ENCODE measurements at regions of chr1 and their contacts with region 1.

Region 1: GRCh38 chr1:15526490-15527339 is at the start of gene DNAJC16:
- DNase-seq: peak; percentile 97 to 100 (median 99)

Region 2: GRCh38 chr1:15124362-15125100 is 402.2 kb before region 1 on chr1:
- intact Hi-C with region 1: no loop called
- DNase-seq: peak in 1 of 10 donors; percentile 73

Region 3: DNA sequence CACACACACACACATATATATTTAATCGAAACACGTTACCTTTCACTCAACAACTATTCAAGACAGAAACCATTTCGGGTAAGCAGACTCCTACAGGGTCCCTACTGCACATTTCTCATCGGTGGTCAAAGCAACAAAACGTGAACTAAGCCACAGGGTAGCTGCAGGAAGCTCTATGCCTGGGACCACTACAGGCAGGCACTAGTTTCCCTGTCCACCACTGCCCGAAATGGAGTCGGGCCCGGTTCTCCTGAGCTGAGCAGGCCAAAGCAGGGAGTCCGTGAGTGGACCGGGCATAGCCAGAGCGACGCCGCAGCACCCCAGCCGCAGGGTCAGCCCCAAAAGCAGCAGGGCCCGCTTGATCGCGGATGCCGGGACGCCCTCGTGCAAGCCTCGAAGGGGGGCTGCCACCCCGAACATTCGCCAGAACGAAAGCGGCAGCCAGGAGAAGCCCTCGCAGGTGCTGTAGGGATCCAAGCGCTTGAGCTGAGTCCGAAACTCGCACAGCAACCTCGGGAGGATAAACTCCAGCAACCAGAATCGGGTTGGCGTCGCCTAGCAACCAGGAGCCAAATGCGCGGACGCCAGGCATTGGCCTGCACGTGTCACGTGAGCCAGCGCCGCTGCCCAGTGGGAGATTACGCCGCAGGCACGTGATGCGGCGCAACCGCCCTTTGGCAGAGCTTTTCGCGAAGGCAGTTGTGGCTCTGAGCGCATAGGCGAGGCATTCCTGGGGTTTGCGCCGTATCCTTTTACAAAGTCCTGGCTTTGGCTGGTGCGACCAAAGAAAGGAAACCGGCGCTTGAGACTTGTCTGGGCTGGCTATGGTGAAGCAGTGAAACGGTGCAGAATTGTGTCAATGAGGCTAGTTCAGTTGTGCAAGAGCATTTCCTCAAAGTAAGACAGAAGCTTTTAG is 76.6 kb after region 1 on chr1:
- intact Hi-C with region 1: loop called (anchors 5 kb)
- DNase-seq: peak; percentile 95 to 100 (median 97)